Activated T-helper 1 cell treated with anti-CD3 and anti-CD28 coated beads, Interleukin-12 subunit alpha, Interleukin-12 subunit beta, Interleukin-2, Interleukin-4 antibody, amounts not matched to agents 30 ng/mL and 10 ng/mL and 1 ng/mL, durations not matched to agents 14 hours and 24 hours and 36 hours (primary cell): ENCODE measurements at regions of chr12 and their contacts with region 1.

Region 1: DNA sequence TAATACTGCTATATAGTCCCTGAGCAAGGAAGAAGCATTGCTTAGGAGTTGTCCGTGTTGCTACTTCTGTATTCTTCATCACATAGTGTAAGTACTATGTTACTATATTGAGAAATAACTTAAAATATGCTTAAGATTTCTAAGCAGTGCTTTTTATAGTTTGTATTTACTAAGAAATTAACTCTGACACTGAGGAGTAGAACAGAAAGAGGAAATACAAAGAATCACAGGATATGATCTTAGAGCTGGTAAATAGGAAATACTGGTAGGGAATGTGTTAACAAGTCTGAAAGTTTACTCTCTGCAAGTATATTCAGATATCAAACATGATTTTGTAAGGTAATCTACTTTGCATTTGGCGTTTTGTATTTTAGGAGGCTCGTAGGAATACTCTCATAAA is 15.5 kb downstream of the XPOT start:
- DNase-seq: no peak
- H3K4me3 Mint-ChIP-seq: no peak overlapping the region
- H3K27ac Mint-ChIP-seq: peak overlapping the region; percentile 73
- H3K4me1 Mint-ChIP-seq: peaks cover 19% of the 10 kb centered on the region
- H3K27me3 Mint-ChIP-seq: no peaks in the 10 kb centered on the region

Region 2: DNA sequence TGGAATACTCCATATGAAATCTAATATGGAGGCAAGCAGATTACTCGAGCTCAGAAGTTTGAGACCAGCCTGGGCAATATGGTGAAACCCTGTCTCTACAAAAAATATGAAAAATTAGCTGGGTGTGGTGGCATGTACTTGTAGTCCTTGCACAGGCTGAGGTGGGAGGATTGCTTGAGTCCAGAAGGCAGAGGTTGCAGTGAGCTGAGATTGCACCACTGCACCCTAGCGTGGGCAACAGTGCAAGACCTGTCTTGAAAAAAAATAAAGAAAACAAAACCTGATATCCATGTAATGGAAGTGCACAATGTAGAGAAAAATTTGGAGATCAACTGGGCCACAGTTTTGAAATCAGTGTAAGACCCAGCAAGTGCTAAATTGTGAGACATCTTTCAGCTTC is 46.5 kb before region 1 on chr12:
- intact Hi-C with region 1: no loop called
- DNase-seq: no peak
- H3K4me3 Mint-ChIP-seq: no peak overlapping the region
- H3K27ac Mint-ChIP-seq: no peak overlapping the region
- H3K4me1 Mint-ChIP-seq: no peaks in the 10 kb centered on the region
- H3K27me3 Mint-ChIP-seq: peaks cover 4% of the 10 kb centered on the region

Region 3: GRCh38 chr12:64445490-64445889 is 25.8 kb after region 1 on chr12:
- intact Hi-C with region 1: loop called (anchors 2 kb)
- DNase-seq: no peak
- H3K4me3 Mint-ChIP-seq: no peak overlapping the region
- H3K27ac Mint-ChIP-seq: peak overlapping the region; percentile 14
- H3K4me1 Mint-ChIP-seq: peaks cover 24% of the 10 kb centered on the region
- H3K27me3 Mint-ChIP-seq: no peaks in the 10 kb centered on the region